ENCODE measurements at regions of chr2 and their contacts with region 1.

Region 1: GRCh38 chr2:236168110-236169067 is at the start of gene GBX2:
- DNase-seq: no peak
- H3K4me3 Mint-ChIP-seq: no peak within 1 kb of the TSS
- H3K27ac Mint-ChIP-seq: peak within 1 kb of the TSS; percentile 60
- H3K4me1 Mint-ChIP-seq: peaks cover 17% of the 10 kb centered on the region
- H3K27me3 Mint-ChIP-seq: peaks cover 56% of the 10 kb centered on the region
- total RNA-seq, gene GBX2: not detected

Region 2: GRCh38 chr2:235669983-235670962 is 498.1 kb before region 1 on chr2:
- CTCF ChIA-PET with region 1: no interaction called
- POLR2A ChIA-PET with region 1: no interaction called
- intact Hi-C with region 1: loop called (anchors 10 kb)
- DNase-seq: no peak
- H3K4me3 Mint-ChIP-seq: no peak overlapping the region
- H3K27ac Mint-ChIP-seq: no peak overlapping the region
- H3K4me1 Mint-ChIP-seq: peaks cover 10% of the 10 kb centered on the region
- H3K27me3 Mint-ChIP-seq: peaks cover 45% of the 10 kb centered on the region